Aorta (tissue), 5 donors: ENCODE measurements at regions of chr1 and their contacts with region 1.

Region 1: DNA sequence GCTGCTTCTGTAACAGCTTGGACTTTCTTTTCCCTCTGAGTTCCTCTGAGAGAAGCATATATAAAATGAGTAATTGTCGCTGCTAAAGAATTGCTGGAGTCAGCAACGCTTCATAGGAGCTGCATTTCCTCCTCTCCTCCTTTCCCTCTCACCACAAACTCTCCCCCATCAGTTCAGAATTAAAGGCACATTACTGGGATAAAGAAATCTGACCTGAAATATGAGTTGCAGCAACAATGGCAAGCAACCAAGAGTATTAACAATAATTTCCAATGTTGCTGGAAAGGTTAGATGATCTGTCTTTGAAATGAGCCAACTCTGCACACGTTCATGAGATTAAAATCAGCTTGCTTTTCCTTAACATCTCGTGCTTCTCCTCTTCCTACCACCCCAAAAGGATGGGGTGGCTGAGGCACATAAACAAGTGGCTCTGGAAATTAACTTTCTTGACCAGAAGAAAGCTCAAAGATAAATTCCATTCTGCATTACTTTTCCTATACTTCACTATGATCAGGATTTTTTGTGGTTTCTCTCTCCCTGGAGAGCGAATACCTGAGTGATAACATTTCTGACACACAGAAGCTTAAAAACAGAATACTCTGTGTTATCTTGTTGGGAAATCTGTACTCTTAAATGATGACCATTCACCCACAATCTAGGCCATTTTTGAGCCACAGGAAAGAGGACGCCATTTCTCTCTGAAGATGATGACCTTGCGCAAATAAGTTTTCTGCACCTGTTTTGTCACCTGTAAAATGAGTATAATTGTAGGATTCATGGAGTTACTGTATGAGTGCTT is 90.2 kb downstream of the TGFBR3 start:
- DNase-seq: no peak
- ATAC-seq: peak; percentile 23
- H3K4me3 ChIP-seq: no peak overlapping the region
- H3K27ac ChIP-seq: peak overlapping the region in 1 of 2 donors; percentile 28
- H3K4me1 ChIP-seq: peaks cover 0 to 2% of the 10 kb centered on the region in 2 donors
- H3K27me3 ChIP-seq: no peaks in the 10 kb centered on the region

Region 2: DNA sequence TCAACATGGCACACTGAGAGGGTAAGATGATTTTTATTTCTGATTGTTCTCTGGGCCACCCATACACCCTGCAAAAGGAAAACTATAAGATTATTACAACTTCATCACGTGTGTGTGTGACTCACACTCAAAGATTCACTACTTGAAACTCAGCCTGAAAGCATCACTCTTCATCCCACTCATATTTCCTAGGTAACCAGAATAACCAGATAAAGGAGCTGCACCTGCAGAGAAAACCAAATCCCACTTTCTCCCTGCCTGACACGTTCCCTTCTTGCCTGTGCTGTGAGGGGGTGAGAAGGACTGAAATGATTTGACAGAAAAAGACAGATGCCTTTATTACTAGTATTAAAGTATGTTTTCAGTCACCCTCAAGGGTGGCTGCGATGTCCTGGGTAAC is 41.4 kb before region 1 on chr1:
- intact Hi-C with region 1: loop called in 1 of 2 experiments (anchors 5 kb)
- DNase-seq: no peak
- ATAC-seq: no peak
- H3K4me3 ChIP-seq: no peak overlapping the region
- H3K27ac ChIP-seq: no peak overlapping the region
- H3K4me1 ChIP-seq: peaks cover 0 to 6% of the 10 kb centered on the region in 2 donors
- H3K27me3 ChIP-seq: no peaks in the 10 kb centered on the region

Region 3: GRCh38 chr1:91851130-91852010 is 55.6 kb after region 1 on chr1:
- intact Hi-C with region 1: no loop called
- DNase-seq: peak; percentile 95
- ATAC-seq: peak; percentile 90
- H3K4me3 ChIP-seq: peak overlapping the region in 1 of 2 donors; percentile 8
- H3K27ac ChIP-seq: peak overlapping the region; percentile 22 to 96
- H3K4me1 ChIP-seq: peaks cover 3 to 4% of the 10 kb centered on the region in 2 donors
- H3K27me3 ChIP-seq: no peaks in the 10 kb centered on the region